ENCODE measurements at regions of chr1 and their contacts with region 1.

Region 1: DNA sequence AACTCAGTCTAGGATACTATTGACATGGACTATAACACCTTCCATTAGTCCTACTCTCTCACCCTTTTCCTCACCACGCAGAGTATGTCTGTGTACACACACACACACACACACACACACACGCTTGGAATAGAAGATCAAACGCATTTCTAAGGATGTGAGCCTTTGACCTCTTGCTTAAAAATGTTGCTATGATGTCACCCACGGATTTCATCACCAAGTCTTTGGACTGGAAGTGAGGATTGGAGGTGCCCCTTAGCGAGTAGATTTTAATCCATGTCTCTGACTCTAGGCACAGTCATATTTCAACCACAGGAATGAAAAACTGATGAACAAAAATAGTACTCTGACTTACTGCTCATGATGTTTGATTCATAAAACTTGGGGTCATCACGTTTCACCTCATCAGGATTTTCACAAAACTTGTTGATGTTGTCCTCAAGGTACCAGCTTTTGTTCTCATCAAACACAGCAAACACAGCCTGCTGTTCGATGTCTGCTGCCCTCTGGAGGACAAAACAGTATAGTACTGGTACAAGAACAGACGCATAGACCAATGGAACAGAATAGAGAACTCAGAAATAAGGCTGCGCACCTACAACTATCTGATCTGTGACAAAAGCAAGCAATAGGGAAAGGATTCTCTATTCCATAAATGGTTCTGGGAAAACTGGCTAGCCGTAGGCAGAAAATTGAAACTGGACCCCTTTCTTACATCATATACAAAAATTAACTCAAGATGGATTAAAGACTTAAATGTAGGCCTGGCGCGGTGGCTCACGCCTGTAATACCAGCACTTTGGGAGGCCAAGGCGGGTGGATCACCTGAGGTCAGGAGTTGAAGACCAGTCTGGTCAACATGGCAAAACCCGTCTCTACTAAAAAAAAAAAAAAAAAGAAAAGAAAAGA is 39.9 kb downstream of the F5 start:
- DNase-seq: peak; percentile 77
- H3K4me3 ChIP-seq: no peak overlapping the region
- H3K27ac ChIP-seq: no peak overlapping the region
- H3K4me1 ChIP-seq: no peaks in the 10 kb centered on the region
- H3K27me3 ChIP-seq: no peaks in the 10 kb centered on the region
- CTCF ChIP-seq: peak; percentile 66

Region 2: GRCh38 chr1:168603501-168604110 is 942.7 kb before region 1 on chr1:
- intact Hi-C with region 1: loop called (anchors 10 kb)
- DNase-seq: peak; percentile 82
- H3K4me3 ChIP-seq: no peak overlapping the region
- H3K27ac ChIP-seq: no peak overlapping the region
- H3K4me1 ChIP-seq: no peaks in the 10 kb centered on the region
- H3K27me3 ChIP-seq: no peaks in the 10 kb centered on the region
- CTCF ChIP-seq: peak; percentile 78

Region 3: GRCh38 chr1:169201084-169201619 is 345.2 kb before region 1 on chr1:
- intact Hi-C with region 1: no loop called
- DNase-seq: no peak
- H3K4me3 ChIP-seq: no peak overlapping the region
- H3K27ac ChIP-seq: no peak overlapping the region
- H3K4me1 ChIP-seq: no peaks in the 10 kb centered on the region
- H3K27me3 ChIP-seq: no peaks in the 10 kb centered on the region
- CTCF ChIP-seq: no peak

Region 4: GRCh38 chr1:169367486-169368405 is 178.6 kb before region 1 on chr1 and contains the starts of genes BLZF1 and NME7:
- intact Hi-C with region 1: loop called (anchors 10 kb)
- DNase-seq: peak; percentile 99
- H3K4me3 ChIP-seq: peak within 1 kb of the TSS; percentile 68
- H3K27ac ChIP-seq: peak within 1 kb of the TSS; percentile 86
- H3K4me1 ChIP-seq: no peaks in the 10 kb centered on the region
- H3K27me3 ChIP-seq: no peaks in the 10 kb centered on the region
- CTCF ChIP-seq: no peak
- total RNA-seq, gene BLZF1: 20.5 to 24.4 TPM
- total RNA-seq, gene NME7: 4.1 to 4.8 TPM

Region 5: GRCh38 chr1:169466259-169467230 is 79.8 kb before region 1 on chr1:
- intact Hi-C with region 1: loop called (anchors 5 kb)
- DNase-seq: no peak
- H3K4me3 ChIP-seq: no peak overlapping the region
- H3K27ac ChIP-seq: no peak overlapping the region
- H3K4me1 ChIP-seq: no peaks in the 10 kb centered on the region
- H3K27me3 ChIP-seq: no peaks in the 10 kb centered on the region
- CTCF ChIP-seq: no peak

Region 6: GRCh38 chr1:169711469-169712281 is 165.3 kb after region 1 on chr1 and contains the start of gene SELL:
- intact Hi-C with region 1: loop called (anchors 5 kb)
- DNase-seq: peak; percentile 81
- H3K4me3 ChIP-seq: peak within 1 kb of the TSS; percentile 20
- H3K27ac ChIP-seq: no peak within 1 kb of the TSS
- H3K4me1 ChIP-seq: no peaks in the 10 kb centered on the region
- H3K27me3 ChIP-seq: no peaks in the 10 kb centered on the region
- CTCF ChIP-seq: peak; percentile 65
- total RNA-seq, gene SELL: 1.5 to 2.2 TPM

Region 7: GRCh38 chr1:169809370-169810095 is 263.2 kb after region 1 on chr1:
- intact Hi-C with region 1: loop called (anchors 5 kb)
- DNase-seq: no peak
- H3K4me3 ChIP-seq: no peak overlapping the region
- H3K27ac ChIP-seq: no peak overlapping the region
- H3K4me1 ChIP-seq: no peaks in the 10 kb centered on the region
- H3K27me3 ChIP-seq: no peaks in the 10 kb centered on the region
- CTCF ChIP-seq: peak; percentile 37

Measured in colonic mucosa (tissue), 4 donors.